Posterior cingulate gyrus (tissue), 11 donors: ENCODE measurements at regions of chr10 and their contacts with region 1.

Region 1: GRCh38 chr10:69506834-69507721 is 55.8 kb downstream of the TSPAN15 start:
- DNase-seq: peak in 2 of 10 donors; percentile 40 to 87

Region 2: DNA sequence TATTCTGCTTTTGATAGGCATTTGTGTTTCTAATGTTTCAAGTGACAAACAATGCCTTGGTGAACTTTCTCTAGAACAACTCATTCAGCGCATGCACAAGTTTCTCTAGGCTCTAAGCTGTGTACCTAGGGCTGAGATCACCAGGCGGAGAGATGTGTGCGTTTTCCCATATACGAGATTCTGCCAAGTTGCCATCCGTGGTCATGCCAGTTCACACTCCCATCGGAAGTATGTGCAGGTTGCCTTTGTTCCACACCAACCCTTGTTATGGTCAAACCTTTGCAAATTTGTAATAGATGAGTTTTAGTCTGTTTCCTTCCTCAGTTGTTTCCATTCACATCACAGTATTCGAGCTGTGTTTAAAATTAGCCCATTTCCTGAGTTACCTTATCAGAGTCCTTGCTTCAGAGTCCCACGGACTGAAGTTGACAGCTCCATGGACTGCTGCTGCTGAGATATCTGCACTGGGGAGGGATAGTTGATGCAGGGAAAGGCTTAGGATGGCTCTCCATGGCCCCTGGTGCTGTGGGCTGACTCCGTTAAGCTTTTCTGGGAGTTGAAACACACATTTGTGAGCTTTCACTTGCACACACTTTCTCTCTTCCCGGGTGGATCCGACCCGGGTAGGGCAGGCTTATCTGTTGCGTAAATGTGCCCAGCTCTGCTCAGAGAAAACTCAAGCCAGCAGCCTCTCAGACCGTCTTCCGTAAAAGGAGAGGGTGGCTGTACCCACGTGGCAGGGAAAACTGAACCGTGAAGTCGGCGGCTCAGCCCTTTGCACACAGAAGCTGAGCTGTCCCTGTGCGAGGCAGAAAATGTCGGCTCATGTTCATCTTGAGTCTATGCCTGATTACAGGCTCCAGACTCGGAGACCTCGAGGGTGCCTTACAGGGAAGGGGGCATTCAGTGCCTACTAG is 179.4 kb before region 1 on chr10:
- intact Hi-C with region 1: no loop called
- DNase-seq: peak; percentile 41 to 96 (median 74)

Region 3: DNA sequence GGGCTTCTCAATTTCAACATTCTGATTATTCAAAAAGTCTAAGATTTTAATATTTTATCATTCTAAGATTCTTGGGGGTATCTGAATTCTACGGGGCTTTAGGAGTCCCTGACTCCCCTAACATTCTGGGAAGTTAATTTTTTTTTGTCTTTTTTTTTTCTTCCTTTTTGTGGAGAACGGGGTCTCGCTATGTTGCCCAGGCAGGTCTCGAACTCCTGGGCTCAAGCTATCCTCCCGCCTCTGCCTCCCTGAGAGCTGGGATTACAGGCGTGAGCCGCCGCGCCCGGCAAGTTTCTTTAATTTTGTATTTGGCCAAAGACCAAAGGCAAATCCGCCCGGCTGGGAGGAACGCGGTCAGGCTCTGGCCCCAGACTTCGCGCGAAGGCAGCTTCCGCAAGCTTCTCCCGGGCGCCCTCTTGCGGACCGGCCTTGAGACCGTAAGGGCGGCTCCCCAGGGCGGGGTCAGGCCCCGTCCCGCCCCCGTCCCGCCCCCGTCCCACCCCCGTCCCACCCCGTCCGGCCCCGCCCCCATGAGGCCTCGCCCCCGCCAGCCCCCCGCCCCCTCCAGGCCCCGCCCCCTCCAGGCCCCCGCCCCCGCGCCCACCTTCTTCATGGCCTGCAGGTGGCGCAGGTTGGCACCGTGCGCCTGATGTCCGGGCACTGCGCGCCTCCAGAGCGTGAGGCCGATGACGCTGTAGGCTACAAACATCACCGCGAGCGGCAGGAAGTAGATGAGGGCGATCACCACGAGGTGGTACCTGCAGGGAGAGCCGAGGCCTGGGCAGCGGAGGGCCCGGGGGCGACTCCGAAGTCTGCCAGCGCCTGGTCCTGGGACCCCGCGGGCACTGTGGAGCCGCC is 98.5 kb before region 1 on chr10:
- intact Hi-C with region 1: loop called (anchors 5 kb)
- DNase-seq: peak; percentile 78 to 99 (median 90)

Region 4: DNA sequence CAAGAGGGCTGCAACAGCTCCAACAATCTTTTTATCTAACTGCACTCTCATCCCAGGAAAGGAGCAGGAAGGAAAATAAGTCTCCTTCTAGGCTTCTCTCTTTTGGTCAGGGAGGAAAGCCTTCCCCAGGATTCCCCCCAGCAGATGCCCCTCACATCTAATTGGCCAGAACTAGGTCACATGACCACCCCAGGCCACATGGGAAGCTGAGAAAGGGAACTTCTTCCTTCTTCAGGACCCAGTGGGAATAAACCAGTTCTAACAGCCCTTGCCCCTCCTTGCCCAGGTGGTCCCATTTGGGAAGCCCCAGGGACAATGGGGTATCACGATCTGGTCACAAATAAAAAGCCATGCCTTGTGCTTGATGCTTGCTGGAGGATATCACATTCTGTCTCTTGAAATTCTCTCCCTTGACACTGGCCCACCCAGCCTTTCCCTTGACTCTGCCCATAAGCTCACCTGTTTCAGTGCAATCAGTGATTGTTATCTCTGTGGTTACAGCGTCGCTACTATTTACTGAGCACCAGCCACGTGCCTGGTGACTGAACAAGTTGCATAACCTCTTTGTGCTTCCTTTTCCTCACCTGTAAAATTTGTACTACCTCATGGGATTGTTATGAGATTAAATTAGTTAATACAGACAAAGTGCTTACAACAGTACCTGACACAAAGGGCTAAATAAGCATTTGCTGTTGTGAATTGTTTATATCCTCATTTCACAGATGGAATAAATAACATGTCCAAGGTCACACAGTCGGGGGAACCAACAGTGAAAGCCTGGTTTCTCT is 81.4 kb before region 1 on chr10:
- intact Hi-C with region 1: loop called (anchors 1 kb)
- DNase-seq: peak in 1 of 10 donors; percentile 2

Region 5: GRCh38 chr10:69451209-69451783 is 55.8 kb before region 1 on chr10 and contains the start of gene TSPAN15:
- intact Hi-C with region 1: loop called (anchors 2 kb)
- DNase-seq: peak; percentile 85 to 99 (median 94)

Region 6: DNA sequence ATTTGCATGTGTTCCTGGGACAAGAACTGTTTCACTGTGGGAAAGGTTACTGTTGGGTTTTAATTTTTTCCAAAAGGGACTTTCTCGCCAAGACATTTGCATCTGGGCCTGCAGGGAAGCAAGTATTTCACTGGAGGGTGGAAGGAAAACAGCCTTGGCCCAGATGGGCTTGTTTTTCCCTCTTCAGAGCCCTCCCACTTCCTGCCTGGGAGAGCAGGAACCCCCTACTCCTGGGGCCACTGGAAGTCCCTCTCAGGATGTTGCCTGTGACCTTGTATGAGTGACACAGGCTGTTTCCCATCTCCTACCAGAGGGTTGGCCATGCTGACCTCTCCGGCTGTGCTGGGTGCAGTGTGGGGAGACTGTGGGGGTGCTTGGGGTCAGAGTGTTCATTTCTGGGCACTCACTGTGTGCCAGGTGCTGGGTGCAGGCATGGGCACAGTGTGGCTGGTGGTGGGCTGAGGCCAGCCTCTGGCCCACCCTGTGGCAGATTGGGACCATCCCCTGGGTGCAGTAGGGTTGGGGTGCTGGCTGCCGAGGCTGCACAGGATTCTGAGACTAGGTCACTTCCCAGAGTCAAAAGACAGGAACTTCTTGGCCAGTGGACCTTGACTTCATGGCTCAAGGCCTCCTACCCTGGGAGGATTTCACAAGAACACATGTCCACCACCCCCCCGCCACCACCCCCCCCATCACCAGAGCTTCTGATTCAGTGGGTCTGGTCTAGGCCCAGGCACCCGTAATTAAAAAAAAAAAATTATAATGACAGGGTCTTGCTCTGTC is 45.6 kb before region 1 on chr10:
- intact Hi-C with region 1: no loop called
- DNase-seq: peak in 1 of 10 donors; percentile 77

Region 7: GRCh38 chr10:69549959-69550358 is 42.9 kb after region 1 on chr10:
- intact Hi-C with region 1: no loop called
- DNase-seq: peak in 1 of 10 donors; percentile 4